CD14-positive monocyte (primary cell): ENCODE measurements at regions of chr19 and their contacts with region 1.

Region 1: DNA sequence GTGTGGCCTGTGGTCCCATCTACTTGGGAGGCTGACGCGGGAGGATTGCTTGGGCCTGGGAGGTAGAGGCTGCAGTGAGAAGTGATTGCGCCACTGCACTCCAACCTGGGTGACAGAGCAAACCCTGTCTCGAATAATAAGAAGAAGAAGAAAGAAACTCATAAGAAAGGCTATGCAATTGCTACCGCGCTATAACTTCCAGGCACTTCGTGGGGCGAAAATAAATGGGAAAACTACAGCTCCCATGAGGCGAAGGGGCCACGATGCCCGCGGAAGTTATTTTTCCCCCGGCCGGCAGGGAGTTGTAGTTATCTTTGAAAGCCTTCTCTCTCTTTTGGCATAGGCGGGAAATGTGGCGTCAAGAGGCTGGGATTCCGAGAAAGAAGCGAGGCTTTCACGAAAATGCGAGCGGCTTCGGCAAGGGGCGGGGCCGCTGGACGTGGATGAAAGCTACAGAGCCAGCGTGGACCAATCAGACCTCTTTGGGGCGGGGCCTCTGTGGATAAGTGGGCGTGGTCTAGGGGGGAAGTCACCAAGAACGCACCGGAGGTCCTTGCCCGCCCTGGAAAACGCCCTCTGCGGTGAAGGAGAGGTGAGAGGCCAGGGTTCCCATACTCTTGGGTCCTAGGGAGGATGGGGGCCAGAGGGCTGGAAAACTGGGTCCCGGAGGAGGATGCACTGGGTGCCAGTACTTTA is at the start of gene NUCB1:
- DNase-seq: peak; percentile 93 to 97 (median 94)
- H3K4me3 ChIP-seq: peak within 1 kb of the TSS; percentile 66 to 100 (median 79)
- H3K4me3 Mint-ChIP-seq: peak within 1 kb of the TSS; percentile 91 to 96
- H3K27ac ChIP-seq: peak within 1 kb of the TSS; percentile 85
- H3K27ac Mint-ChIP-seq: peak within 1 kb of the TSS; percentile 92 to 98 (median 97)
- H3K4me1 ChIP-seq: peaks cover 35 to 46% of the 10 kb centered on the region in 2 donors
- H3K4me1 Mint-ChIP-seq: peaks cover 32% of the 10 kb centered on the region
- H3K27me3 ChIP-seq: peaks cover 4 to 20% of the 10 kb centered on the region in 2 donors
- H3K27me3 Mint-ChIP-seq: peaks cover 25 to 29% (median 28%) of the 10 kb centered on the region in 3 donors
- CTCF ChIP-seq: no peak
- polyA plus RNA-seq, gene NUCB1: 80.9 to 178 (median 108) TPM

Region 2: GRCh38 chr19:48819366-48819816 is 80.5 kb before region 1 on chr19:
- intact Hi-C with region 1: no loop called
- DNase-seq: no peak
- H3K4me3 ChIP-seq: no peak overlapping the region
- H3K4me3 Mint-ChIP-seq: no peak overlapping the region
- H3K27ac ChIP-seq: no peak overlapping the region
- H3K27ac Mint-ChIP-seq: peak overlapping the region in 1 of 7 donors; percentile 31
- H3K4me1 ChIP-seq: no peaks in the 10 kb centered on the region
- H3K4me1 Mint-ChIP-seq: no peaks in the 10 kb centered on the region
- H3K27me3 ChIP-seq: no peaks in the 10 kb centered on the region
- H3K27me3 Mint-ChIP-seq: peaks cover 2 to 4% (median 3%) of the 10 kb centered on the region in 3 donors
- CTCF ChIP-seq: no peak

Region 3: GRCh38 chr19:48954595-48955310 is 54.8 kb after region 1 on chr19 and contains the start of gene BAX:
- intact Hi-C with region 1: loop called in 1 of 2 experiments (anchors 5 kb)
- DNase-seq: peak; percentile 79 to 88 (median 80)
- H3K4me3 ChIP-seq: peak within 1 kb of the TSS; percentile 79 to 97 (median 94)
- H3K4me3 Mint-ChIP-seq: peak within 1 kb of the TSS; percentile 82 to 88
- H3K27ac ChIP-seq: peak within 1 kb of the TSS; percentile 54 to 86
- H3K27ac Mint-ChIP-seq: peak within 1 kb of the TSS; percentile 81 to 91 (median 87)
- H3K4me1 ChIP-seq: peaks cover 29 to 40% of the 10 kb centered on the region in 2 donors
- H3K4me1 Mint-ChIP-seq: peaks cover 42% of the 10 kb centered on the region
- H3K27me3 ChIP-seq: no peaks in the 10 kb centered on the region
- H3K27me3 Mint-ChIP-seq: peaks cover 0 to 2% (median 0%) of the 10 kb centered on the region in 3 donors
- CTCF ChIP-seq: no peak
- polyA plus RNA-seq, gene BAX: 69.2 to 135 (median 80.5) TPM